ENCODE measurements at regions of chr17 and their contacts with region 1.

Region 1: GRCh38 chr17:56960596-56961538 is at the start of gene COIL:
- DNase-seq: peak; percentile 97
- H3K4me3 Mint-ChIP-seq: peak within 1 kb of the TSS; percentile 80
- H3K27ac Mint-ChIP-seq: peak within 1 kb of the TSS; percentile 81
- H3K4me1 Mint-ChIP-seq: peaks cover 25% of the 10 kb centered on the region
- H3K27me3 Mint-ChIP-seq: no peaks in the 10 kb centered on the region
- total RNA-seq, gene COIL: 16.9 to 18.2 TPM

Region 2: GRCh38 chr17:56638591-56639051 is 322.2 kb before region 1 on chr17:
- CTCF ChIA-PET with region 1: no interaction called
- intact Hi-C with region 1: no loop called
- DNase-seq: no peak
- H3K4me3 Mint-ChIP-seq: no peak overlapping the region
- H3K27ac Mint-ChIP-seq: no peak overlapping the region
- H3K4me1 Mint-ChIP-seq: peaks cover 11% of the 10 kb centered on the region
- H3K27me3 Mint-ChIP-seq: no peaks in the 10 kb centered on the region

Region 3: GRCh38 chr17:56819431-56820145 is 141.3 kb before region 1 on chr17:
- CTCF ChIA-PET with region 1: interaction called, 11 read pairs
- intact Hi-C with region 1: loop called (anchors 1 kb)
- DNase-seq: peak; percentile 88
- H3K4me3 Mint-ChIP-seq: no peak overlapping the region
- H3K27ac Mint-ChIP-seq: no peak overlapping the region
- H3K4me1 Mint-ChIP-seq: peaks cover 8% of the 10 kb centered on the region
- H3K27me3 Mint-ChIP-seq: no peaks in the 10 kb centered on the region

Region 4: GRCh38 chr17:56913864-56914640 is 46.8 kb before region 1 on chr17 and contains the start of gene TRIM25:
- CTCF ChIA-PET with region 1: no interaction called
- intact Hi-C with region 1: loop called (anchors 1 kb)
- DNase-seq: peak; percentile 94
- H3K4me3 Mint-ChIP-seq: peak within 1 kb of the TSS; percentile 83
- H3K27ac Mint-ChIP-seq: peak within 1 kb of the TSS; percentile 98
- H3K4me1 Mint-ChIP-seq: peaks cover 50% of the 10 kb centered on the region
- H3K27me3 Mint-ChIP-seq: no peaks in the 10 kb centered on the region
- total RNA-seq, gene TRIM25: 157 to 161 TPM

Region 5: DNA sequence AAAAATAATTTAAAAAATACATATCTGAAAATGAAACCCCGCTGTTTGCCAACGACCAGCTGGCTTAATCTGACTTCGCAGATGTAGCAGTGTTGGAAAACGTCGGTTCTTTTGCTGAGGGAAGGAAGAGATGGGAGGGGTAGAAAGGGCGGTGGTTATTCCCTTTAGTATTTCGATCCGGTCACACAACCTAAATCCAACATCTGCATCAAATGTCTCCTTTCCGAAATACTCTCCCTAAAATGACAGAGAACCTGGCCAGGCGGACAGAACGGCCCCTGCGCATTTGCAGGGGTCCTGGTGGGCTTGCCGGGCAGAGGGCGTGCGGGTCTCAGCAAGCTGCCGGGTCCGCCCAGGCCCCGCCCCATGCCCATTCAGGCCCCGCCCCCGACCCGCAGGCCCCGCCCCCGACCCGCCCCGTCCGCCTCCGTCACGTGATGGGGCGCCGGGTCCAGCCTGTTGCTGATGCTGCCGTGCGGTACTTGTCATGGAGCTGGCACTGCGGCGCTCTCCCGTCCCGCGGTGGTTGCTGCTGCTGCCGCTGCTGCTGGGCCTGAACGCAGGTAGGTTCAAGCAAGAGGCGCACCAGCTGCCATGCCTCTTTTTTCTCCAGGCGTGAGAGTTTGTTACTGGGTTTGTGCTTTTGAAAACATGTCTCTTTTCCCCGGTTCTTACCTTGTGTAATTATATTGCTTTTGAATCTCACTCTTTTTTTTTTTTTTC is 17.0 kb after region 1 on chr17 and contains the start of gene SCPEP1:
- CTCF ChIA-PET with region 1: interaction called, 7 read pairs
- intact Hi-C with region 1: loop called (anchors 1 kb)
- DNase-seq: peak; percentile 85
- H3K4me3 Mint-ChIP-seq: peak within 1 kb of the TSS; percentile 90
- H3K27ac Mint-ChIP-seq: peak within 1 kb of the TSS; percentile 39
- H3K4me1 Mint-ChIP-seq: peaks cover 19% of the 10 kb centered on the region
- H3K27me3 Mint-ChIP-seq: peaks cover 3% of the 10 kb centered on the region
- total RNA-seq, gene SCPEP1: 11.7 to 15.3 TPM

Region 6: DNA sequence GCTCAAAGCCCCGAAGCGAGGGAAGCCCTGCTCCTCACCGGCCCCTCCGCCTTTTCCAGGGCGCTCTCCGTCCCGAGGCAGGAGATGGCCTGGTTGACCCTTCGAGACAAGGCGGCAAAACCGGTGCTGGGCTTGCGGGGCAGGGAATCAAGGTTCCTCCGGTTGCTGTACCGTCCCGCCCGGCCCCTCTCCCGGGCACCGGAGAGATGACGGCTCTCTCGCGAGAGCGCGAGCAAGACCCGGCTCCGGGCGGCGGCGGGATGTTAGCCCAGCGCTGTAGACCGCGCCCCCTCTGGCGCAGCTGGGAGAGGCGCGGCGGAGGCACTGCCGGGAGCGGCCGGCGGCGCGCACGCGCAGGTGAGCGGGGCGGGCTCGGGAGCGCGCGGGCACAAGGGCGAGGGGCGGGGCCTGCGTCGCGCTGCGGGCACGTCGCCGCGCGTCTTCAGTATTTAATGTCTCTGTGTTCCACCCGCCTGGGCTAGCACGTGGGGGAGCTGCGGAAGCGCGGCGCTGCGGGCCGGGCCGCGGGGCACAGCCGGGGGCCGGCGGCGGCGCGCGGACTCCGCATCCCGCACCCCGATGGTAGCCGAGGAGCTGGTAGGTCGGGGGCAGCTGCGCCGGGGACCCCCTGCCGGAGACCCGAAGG is 124.1 kb after region 1 on chr17 and contains the start of gene AKAP1:
- CTCF ChIA-PET with region 1: no interaction called
- intact Hi-C with region 1: loop called (anchors 1 kb)
- DNase-seq: peak; percentile 95
- H3K4me3 Mint-ChIP-seq: peak within 1 kb of the TSS; percentile 83
- H3K27ac Mint-ChIP-seq: peak within 1 kb of the TSS; percentile 81
- H3K4me1 Mint-ChIP-seq: peaks cover 43% of the 10 kb centered on the region
- H3K27me3 Mint-ChIP-seq: no peaks in the 10 kb centered on the region
- total RNA-seq, gene AKAP1: 17.6 to 23.1 TPM